ENCODE measurements at regions of chr3 and their contacts with region 1.

Region 1: GRCh38 chr3:41881233-41881821 is 80.6 kb downstream of the ULK4 start:
- DNase-seq: no peak
- H3K4me3 Mint-ChIP-seq: no peak overlapping the region
- H3K27ac Mint-ChIP-seq: no peak overlapping the region
- H3K4me1 Mint-ChIP-seq: no peaks in the 10 kb centered on the region
- H3K27me3 Mint-ChIP-seq: no peaks in the 10 kb centered on the region

Region 2: DNA sequence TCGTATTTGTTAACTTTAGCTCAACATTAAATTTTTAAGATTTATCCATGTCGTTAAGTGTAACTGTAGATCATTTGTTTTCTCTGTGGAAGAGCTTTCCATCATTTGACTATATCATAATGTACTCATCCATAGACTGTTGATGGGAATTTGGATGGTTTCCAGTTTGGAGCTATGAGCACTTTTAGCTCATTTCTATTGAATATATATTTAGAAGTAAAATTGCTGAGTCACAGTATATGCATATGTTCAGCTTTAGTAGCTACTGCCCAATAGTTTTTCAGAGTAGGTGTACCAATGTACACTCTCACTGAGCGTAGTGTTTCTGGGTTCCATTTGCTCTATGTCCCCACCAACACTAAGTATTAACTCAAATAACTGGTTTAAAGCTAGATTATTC is 182.4 kb before region 1 on chr3:
- CTCF ChIA-PET with region 1: no interaction called
- POLR2A ChIA-PET with region 1: no interaction called
- intact Hi-C with region 1: loop called (anchors 5 kb)
- DNase-seq: no peak
- H3K4me3 Mint-ChIP-seq: no peak overlapping the region
- H3K27ac Mint-ChIP-seq: no peak overlapping the region
- H3K4me1 Mint-ChIP-seq: no peaks in the 10 kb centered on the region
- H3K27me3 Mint-ChIP-seq: no peaks in the 10 kb centered on the region

Region 3: GRCh38 chr3:42036483-42036823 is 155.1 kb after region 1 on chr3:
- CTCF ChIA-PET with region 1: no interaction called
- POLR2A ChIA-PET with region 1: no interaction called
- intact Hi-C with region 1: no loop called
- DNase-seq: no peak
- H3K4me3 Mint-ChIP-seq: no peak overlapping the region
- H3K27ac Mint-ChIP-seq: no peak overlapping the region
- H3K4me1 Mint-ChIP-seq: peaks cover 18% of the 10 kb centered on the region
- H3K27me3 Mint-ChIP-seq: no peaks in the 10 kb centered on the region

Measured in activated CD4-positive, alpha-beta memory T cell treated with anti-CD3 and anti-CD28 coated beads for 36 hours (primary cell).